Activated B cell treated with CpG ODN at 0.5 μM for 24 hours (primary cell): ENCODE measurements at regions of chr6 and their contacts with region 1.

Region 1: DNA sequence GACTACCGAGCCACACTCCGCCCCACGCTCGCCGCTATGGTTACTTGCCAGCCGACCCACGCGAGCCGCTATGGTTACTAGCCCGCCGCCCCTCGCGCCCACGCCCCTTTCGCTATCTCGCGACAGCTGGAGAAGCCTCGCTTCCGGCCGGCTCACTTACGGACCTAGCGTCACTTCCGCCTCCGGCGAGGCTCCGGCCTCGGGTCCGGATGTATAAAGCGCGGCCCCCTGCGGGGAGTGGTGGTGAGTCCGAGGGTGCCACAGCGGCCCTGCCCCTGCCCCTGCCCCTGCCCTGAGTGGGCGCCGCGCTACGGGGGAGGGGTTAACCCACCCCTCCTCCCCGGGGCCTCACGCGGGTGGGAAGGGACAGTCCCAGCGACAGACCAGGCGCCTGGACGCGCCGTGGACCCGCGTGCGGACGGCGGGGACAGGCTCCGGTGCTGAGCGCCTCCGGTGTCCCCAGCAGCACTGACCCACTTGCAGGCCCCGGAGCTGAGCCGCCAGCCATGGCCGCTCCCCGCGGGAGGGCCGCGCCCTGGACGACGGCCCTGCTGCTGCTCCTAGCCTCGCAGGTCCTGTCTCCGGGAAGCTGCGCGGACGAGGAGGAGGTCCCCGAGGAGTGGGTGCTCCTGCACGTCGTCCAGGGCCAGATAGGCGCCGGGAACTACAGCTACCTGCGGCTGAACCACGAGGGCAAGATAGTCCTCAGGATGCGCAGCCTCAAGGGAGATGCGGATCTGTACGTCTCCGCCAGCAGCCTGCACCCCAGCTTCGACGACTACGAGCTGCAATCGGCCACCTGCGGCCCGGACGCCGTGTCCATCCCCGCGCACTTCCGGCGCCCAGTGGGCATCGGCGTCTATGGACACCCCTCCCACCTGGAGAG is at the starts of genes C6orf120 and WDR27:
- DNase-seq: peak; percentile 96
- ATAC-seq: peak; percentile 87
- H3K4me3 Mint-ChIP-seq: peak within 1 kb of the TSS; percentile 92
- H3K27ac Mint-ChIP-seq: peak within 1 kb of the TSS; percentile 88
- H3K4me1 Mint-ChIP-seq: peaks cover 51% of the 10 kb centered on the region
- H3K27me3 Mint-ChIP-seq: no peaks in the 10 kb centered on the region
- CTCF ChIP-seq: no peak
- total RNA-seq, gene C6orf120: 21.7 and 24.8 TPM in 2 replicates
- total RNA-seq, gene WDR27: 36.8 and 49.1 TPM in 2 replicates

Region 2: DNA sequence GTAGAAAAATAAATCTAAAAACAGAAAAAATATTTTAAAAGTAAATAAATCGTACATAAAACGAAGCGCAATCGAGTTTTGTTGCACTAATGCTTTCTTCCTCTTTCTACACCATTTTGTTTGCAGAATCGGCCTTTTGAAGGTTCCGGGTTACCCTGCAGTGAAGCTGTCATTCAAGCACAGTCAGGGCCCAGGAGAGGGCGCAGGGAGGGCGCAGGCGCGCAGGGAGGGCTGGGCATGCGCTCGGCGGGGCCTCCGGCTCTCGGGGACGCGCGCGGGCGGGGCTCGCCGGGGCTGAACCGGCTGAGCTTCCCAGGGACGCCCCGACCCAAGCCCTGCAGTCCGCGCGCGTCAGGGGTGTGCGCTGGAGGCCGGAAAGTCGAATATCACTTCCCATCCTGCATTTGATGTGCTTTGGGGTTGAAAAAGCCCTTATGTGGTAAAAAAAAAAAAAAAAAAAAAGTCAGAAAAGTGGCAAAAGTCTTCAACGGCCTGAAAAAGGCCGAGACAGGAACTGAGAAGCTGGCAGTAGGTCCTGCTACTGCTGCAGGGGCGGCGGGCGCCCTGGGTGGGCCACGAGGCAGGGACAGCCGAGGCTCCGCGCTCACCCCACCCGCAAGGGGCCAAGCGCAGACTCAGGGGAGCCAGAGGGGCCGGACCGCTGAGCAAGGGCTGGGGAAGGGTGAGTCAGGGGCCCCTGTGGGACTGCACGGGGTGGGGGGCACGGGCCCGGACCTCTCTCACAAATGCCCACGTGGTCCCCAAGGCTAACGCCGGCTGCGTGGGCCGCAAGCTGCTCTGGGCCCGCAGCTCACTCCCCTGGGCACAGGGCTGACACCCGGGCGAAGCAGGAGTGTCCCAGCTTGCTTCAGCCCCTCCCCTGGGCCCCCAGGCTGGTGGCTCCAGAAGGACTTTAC is 489.0 kb before region 1 on chr6:
- CTCF ChIA-PET with region 1: no interaction called
- POLR2A ChIA-PET with region 1: interaction called, 17 read pairs
- intact Hi-C with region 1: loop called (anchors 5 kb)
- DNase-seq: peak; percentile 82
- ATAC-seq: peak; percentile 98
- H3K4me3 Mint-ChIP-seq: peak overlapping the region; percentile 69
- H3K27ac Mint-ChIP-seq: peak overlapping the region; percentile 68
- H3K4me1 Mint-ChIP-seq: peaks cover 2% of the 10 kb centered on the region
- H3K27me3 Mint-ChIP-seq: no peaks in the 10 kb centered on the region
- CTCF ChIP-seq: no peak

Region 3: DNA sequence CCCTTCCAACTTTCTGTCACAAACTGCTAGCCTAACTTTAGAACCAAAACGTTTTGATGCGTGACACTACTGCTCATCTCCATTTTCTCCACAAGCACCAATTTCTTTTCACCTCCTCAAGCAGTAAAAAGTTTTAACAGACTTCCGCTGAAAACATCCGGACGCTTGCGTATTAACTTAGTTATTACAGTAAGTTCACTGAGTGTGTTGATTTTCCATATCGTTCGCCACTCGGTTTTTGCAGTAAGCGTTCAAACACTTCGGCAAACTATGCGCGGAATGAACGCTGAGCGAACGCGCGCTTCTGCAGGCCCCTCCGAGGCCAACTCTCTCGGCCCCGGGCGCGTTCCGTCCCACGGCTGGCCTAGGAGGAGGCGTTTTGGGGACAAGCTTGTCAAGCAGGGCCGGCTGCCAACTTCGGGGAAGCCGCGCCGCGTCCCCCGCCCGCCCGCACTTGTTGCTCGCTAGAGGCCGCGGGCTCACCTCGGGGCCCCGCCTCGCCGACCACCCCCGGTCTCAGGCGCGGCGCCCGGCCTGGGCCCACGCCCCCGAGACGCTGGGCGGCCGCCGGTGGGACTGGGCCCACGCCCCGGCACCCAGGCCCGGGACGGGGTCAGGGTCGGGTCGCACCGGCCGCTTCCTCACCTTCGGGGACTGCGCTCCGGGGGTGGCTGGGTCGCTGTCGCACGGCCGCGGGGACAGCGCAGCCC is 21.2 kb after region 1 on chr6:
- CTCF ChIA-PET with region 1: interaction called, 6 read pairs
- POLR2A ChIA-PET with region 1: interaction called, 64 read pairs
- intact Hi-C with region 1: loop called (anchors 1 kb)
- DNase-seq: peak; percentile 76
- ATAC-seq: peak; percentile 45
- H3K4me3 Mint-ChIP-seq: peak overlapping the region; percentile 82
- H3K27ac Mint-ChIP-seq: peak overlapping the region; percentile 89
- H3K4me1 Mint-ChIP-seq: peaks cover 30% of the 10 kb centered on the region
- H3K27me3 Mint-ChIP-seq: no peaks in the 10 kb centered on the region
- CTCF ChIP-seq: no peak

Region 4: DNA sequence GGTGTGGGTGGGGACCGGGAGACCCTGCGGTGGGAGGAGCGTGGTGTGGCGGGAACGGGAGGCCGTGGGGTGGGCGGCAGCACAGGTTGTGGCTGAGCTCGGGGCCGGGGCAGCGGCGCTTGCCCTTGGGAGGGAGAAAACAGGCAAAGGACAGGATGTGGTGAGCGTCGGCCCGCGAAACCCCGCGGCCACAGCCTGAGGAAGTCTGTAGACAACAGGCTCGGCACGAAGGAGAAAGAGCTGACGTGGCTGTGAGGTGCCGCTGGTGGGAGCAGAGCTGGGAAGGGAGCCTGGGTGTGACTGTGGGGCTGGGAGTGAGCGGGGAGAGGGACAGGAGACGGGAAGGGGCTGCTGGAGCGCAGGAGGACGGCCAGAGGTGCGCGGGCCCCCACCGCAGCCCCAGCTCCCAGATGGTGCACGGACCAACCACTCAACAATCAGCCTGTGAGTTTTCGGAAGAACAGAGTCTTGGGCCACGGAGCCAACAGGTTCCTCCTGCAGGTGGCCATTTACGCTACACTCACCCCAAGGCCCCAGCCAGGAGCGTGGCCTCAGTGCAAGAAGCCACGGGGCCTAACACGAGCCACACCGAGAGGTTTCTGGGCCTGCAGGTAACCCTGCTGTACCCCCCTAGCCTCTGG is 385.9 kb after region 1 on chr6:
- CTCF ChIA-PET with region 1: no interaction called
- POLR2A ChIA-PET with region 1: interaction called, 4 read pairs
- intact Hi-C with region 1: loop called (anchors 1 kb)
- DNase-seq: peak; percentile 44
- ATAC-seq: peak; percentile 57
- H3K4me3 Mint-ChIP-seq: peak overlapping the region; percentile 82
- H3K27ac Mint-ChIP-seq: peak overlapping the region; percentile 85
- H3K4me1 Mint-ChIP-seq: peaks cover 30% of the 10 kb centered on the region
- H3K27me3 Mint-ChIP-seq: no peaks in the 10 kb centered on the region
- CTCF ChIP-seq: no peak

Region 5: GRCh38 chr6:170186006-170186958 is 484.1 kb after region 1 on chr6:
- CTCF ChIA-PET with region 1: no interaction called
- POLR2A ChIA-PET with region 1: no interaction called
- intact Hi-C with region 1: no loop called
- DNase-seq: no peak
- ATAC-seq: no peak
- H3K4me3 Mint-ChIP-seq: no peak overlapping the region
- H3K27ac Mint-ChIP-seq: no peak overlapping the region
- H3K4me1 Mint-ChIP-seq: no peaks in the 10 kb centered on the region
- H3K27me3 Mint-ChIP-seq: peaks cover 2% of the 10 kb centered on the region
- CTCF ChIP-seq: no peak

Region 6: DNA sequence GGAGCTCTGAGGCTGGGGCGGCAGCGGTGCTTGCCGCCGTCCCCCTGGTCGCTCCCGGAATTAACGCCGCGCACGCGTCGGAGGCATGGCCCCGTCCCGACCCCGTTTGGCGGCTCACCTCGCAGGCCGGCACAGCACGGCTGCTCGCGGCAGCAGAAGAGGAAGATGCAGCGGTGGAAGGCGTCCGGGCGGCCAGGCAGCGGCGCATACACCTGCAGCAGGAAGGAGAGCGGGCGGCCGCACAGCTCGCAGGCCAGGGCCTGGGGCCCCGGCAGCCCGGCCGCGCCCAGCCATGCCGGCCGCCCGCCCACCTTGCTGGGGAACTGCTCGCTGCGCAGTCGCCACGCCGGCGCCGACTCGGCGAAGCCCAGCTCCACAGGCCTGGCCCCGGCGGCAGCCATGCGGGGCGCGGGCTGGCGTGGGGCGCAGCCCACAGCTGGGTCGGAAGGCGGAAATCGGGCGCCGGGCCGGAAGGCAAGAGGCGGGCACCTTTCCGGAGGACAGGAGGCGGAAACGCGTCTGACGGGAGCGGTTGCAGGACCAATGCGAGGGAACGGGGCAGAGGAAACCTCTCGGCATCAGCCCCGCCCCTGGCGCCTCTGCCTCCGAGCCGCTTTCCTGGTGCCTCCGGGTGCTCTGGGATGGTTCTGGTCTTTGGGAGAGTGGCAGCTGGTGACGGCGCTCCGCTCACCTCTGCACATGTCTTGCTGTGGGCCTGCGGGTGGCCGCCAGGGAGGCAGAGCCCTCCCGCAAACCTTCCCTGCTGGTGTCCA is 882.2 kb after region 1 on chr6 and contains the start of gene PDCD2:
- CTCF ChIA-PET with region 1: no interaction called
- POLR2A ChIA-PET with region 1: interaction called, 4 read pairs
- intact Hi-C with region 1: loop called (anchors 1 kb)
- DNase-seq: peak; percentile 86
- ATAC-seq: peak; percentile 95
- H3K4me3 Mint-ChIP-seq: peak within 1 kb of the TSS; percentile 98
- H3K27ac Mint-ChIP-seq: peak within 1 kb of the TSS; percentile 94
- H3K4me1 Mint-ChIP-seq: peaks cover 20% of the 10 kb centered on the region
- H3K27me3 Mint-ChIP-seq: no peaks in the 10 kb centered on the region
- CTCF ChIP-seq: no peak
- total RNA-seq, gene PDCD2: 88.4 and 90.8 TPM in 2 replicates